RWPE1 (cell line): ENCODE measurements at regions of chr5 and their contacts with region 1.

Region 1: GRCh38 chr5:131180407-131180806 is 9.7 kb downstream of the LYRM7 start:
- DNase-seq: no peak
- H3K27ac ChIP-seq: no peak overlapping the region
- CTCF ChIP-seq: no peak

Region 2: DNA sequence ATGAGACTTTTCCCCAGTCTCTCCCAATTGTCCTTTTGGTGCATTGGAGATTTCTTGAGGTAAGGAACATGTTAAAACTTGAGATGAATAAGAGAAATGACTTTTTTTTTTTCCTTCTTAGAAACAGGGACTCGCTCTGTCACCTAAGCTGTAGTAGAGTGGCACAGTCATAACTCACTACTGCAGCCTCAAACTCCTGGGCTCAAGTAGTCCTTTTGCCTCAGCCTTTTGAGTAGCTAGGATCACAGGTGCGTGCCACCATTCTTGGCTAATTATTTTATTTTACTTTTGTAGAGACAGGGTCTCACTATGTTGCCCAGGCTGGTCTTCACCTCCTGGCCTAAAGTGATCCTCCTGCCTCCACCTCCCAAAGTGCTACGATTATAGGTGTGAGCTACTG is 109.3 kb after region 1 on chr5:
- CTCF ChIA-PET with region 1: interaction called, 10 read pairs
- POLR2A ChIA-PET with region 1: no interaction called
- DNase-seq: no peak
- H3K27ac ChIP-seq: no peak overlapping the region
- CTCF ChIP-seq: no peak